Common myeloid progenitor, CD34-positive (primary cell): ENCODE measurements at regions of chr15 and their contacts with region 1.

Region 1: GRCh38 chr15:61834076-61834697 is 226.1 kb downstream of the VPS13C start:
- DNase-seq: peak; percentile 59 to 83 (median 77)
- H3K4me3 ChIP-seq: no peak overlapping the region
- H3K27ac ChIP-seq: no peak overlapping the region
- H3K4me1 ChIP-seq: peaks cover 0 to 20% (median 18%) of the 10 kb centered on the region in 4 experiments
- H3K27me3 ChIP-seq: peaks cover 0 to 8% (median 5%) of the 10 kb centered on the region in 5 experiments

Region 2: GRCh38 chr15:60585743-60586708 is 1248.2 kb before region 1 on chr15:
- CTCF ChIA-PET with region 1: interaction called, 12 read pairs
- POLR2A ChIA-PET with region 1: no interaction called
- DNase-seq: peak; percentile 75 to 82 (median 80)
- H3K4me3 ChIP-seq: no peak overlapping the region
- H3K27ac ChIP-seq: no peak overlapping the region
- H3K4me1 ChIP-seq: peaks cover 0 to 7% (median 4%) of the 10 kb centered on the region in 4 experiments
- H3K27me3 ChIP-seq: peaks cover 12 to 37% (median 22%) of the 10 kb centered on the region in 5 experiments

Region 3: DNA sequence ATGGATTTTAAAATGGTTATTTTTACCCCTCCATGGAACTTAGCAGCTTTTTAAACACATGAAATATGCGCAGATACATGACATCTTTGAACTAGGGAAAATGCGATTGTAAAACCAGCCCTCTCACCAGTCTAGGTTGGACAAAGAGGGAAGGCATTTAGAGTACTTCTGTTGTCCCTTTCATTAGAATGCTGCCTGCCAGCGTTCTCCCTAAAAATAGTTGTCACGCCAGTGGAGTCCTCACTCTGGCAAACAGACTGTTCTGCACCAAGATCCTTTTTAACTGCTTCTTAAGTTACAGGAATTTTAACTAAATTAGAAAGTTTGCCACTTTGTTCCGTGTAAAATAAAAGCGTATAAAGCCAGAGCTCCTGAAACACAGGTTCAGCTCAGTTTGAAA is 69.2 kb before region 1 on chr15:
- CTCF ChIA-PET with region 1: no interaction called
- POLR2A ChIA-PET with region 1: no interaction called
- DNase-seq: no peak
- H3K4me3 ChIP-seq: peak overlapping the region in 2 of 7 experiments; percentile 16 to 31
- H3K27ac ChIP-seq: no peak overlapping the region
- H3K4me1 ChIP-seq: peaks cover 0 to 17% (median 8%) of the 10 kb centered on the region in 4 experiments
- H3K27me3 ChIP-seq: no peaks in the 10 kb centered on the region

Region 4: GRCh38 chr15:61784734-61785133 is 49.5 kb before region 1 on chr15:
- CTCF ChIA-PET with region 1: no interaction called
- POLR2A ChIA-PET with region 1: no interaction called
- DNase-seq: no peak
- H3K4me3 ChIP-seq: no peak overlapping the region
- H3K27ac ChIP-seq: no peak overlapping the region
- H3K4me1 ChIP-seq: peaks cover 0 to 6% (median 5%) of the 10 kb centered on the region in 4 experiments
- H3K27me3 ChIP-seq: no peaks in the 10 kb centered on the region